AG04449 (cell line): ENCODE measurements at regions of chr11 and their contacts with region 1.

Region 1: GRCh38 chr11:108008656-108009496 is at the start of gene CUL5:
- DNase-seq: peak; percentile 38
- H3K4me3 ChIP-seq: peak within 1 kb of the TSS; percentile 99
- CTCF ChIP-seq: peak; percentile 99

Region 2: GRCh38 chr11:107957109-107957588 is 51.7 kb before region 1 on chr11:
- CTCF ChIA-PET with region 1: no interaction called
- POLR2A ChIA-PET with region 1: no interaction called
- DNase-seq: no peak
- H3K4me3 ChIP-seq: no peak overlapping the region
- CTCF ChIP-seq: no peak

Region 3: GRCh38 chr11:107969219-107969618 is 39.7 kb before region 1 on chr11:
- CTCF ChIA-PET with region 1: interaction called, 10 read pairs
- POLR2A ChIA-PET with region 1: no interaction called
- DNase-seq: no peak
- H3K4me3 ChIP-seq: no peak overlapping the region
- CTCF ChIP-seq: no peak

Region 4: DNA sequence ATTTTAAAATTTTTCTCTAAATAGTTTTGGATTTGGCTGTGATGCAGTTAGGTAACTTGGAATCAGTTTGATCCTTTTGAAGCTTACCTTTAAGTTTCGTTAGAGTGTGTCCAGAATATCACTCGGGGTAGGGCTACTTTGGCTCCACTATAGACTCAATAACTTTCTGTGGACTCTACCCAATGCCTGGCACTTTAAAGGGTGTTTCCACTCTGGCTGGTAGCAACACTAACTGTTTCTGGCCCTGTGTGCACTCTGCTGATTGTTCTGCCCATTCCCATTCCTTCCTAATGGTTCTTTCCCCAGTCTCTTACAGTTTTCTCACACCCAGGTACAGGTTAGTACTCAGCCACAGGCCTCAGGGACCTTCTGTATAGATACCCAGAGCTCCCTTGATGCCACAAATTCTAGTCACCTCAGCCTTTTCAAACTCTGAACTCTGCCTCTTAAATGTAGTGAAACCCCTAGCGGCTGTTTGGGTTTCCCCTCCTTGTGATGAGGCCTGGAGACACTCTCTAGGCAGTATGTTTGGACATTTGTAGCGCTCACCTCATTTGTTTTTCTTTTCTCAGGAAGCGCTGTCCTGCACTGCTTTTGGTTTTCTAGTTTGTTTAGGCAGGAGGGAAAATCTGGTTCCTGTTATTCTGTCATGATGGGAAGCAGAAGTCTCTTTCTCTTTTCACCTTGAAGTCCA is 16.7 kb after region 1 on chr11:
- CTCF ChIA-PET with region 1: interaction called, 10 read pairs
- POLR2A ChIA-PET with region 1: interaction called, 6 read pairs
- DNase-seq: no peak
- H3K4me3 ChIP-seq: no peak overlapping the region
- CTCF ChIP-seq: no peak

Region 5: GRCh38 chr11:108069947-108070346 is 61.1 kb after region 1 on chr11:
- CTCF ChIA-PET with region 1: no interaction called
- POLR2A ChIA-PET with region 1: no interaction called
- DNase-seq: peak; percentile 49
- H3K4me3 ChIP-seq: no peak overlapping the region
- CTCF ChIP-seq: no peak

Region 6: GRCh38 chr11:108654994-108655631 is 646.2 kb after region 1 on chr11:
- CTCF ChIA-PET with region 1: interaction called, 10 read pairs
- POLR2A ChIA-PET with region 1: no interaction called
- DNase-seq: no peak
- H3K4me3 ChIP-seq: no peak overlapping the region
- CTCF ChIP-seq: peak; percentile 38